Head of caudate nucleus (tissue), 42 donors: ENCODE measurements at regions of chr9 and their contacts with region 1.

Region 1: GRCh38 chr9:35079426-35080341 is at the start of gene FANCG:
- DNase-seq: peak; percentile 84 to 97 (median 93)

Region 2: DNA sequence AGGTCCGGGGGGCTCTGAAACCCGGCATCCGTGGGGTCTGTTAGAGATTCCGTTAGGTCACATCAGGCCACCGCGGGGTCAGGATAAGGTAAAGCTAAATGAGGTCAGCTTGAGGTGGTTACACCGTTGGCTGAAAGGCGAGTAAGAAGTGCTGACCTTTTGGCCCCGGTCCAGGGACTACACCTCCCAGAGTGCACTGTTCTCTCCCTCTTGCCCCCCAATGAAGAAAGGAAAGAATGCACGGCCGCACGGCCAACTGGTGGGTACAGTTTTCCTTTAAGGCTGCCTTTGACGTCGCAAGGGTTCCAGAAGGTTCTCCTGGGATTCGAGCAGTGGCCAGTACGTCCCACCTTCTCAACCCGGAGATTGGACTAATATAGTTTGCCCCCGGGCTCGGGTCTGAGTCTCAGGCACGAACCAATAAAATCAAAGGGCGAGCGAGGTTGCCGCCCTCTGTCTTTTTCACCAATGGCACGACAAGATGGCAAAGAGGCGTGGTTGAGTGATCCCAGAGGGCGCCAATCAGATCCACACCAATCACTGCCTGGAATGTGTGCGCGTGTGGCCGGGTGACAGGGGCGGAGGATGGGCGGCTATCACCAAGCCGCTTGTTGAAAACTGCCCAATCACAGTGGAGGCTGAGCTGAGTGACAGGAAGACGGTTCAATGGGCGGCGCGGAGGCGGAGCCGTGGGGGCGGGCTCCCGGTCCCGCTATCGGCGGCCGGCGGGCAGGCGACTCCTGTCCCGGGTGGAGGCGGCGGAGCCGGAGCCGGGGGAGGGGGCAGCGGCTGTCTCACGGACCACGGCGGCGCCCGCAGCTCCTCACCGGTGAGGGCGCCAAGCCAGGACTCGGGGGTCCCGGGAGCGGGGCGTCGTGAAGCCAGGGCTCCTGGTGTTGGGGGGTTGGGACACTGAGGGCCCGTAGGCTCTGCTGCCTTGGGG is 90.4 kb before region 1 on chr9 and contains the start of gene DNAJB5:
- intact Hi-C with region 1: loop called (anchors 5 kb)
- DNase-seq: peak; percentile 97 to 100 (median 100)

Region 3: GRCh38 chr9:35014517-35014916 is 65.2 kb before region 1 on chr9:
- intact Hi-C with region 1: no loop called
- DNase-seq: no peak